ENCODE measurements at regions of chr17 and their contacts with region 1.

Region 1: DNA sequence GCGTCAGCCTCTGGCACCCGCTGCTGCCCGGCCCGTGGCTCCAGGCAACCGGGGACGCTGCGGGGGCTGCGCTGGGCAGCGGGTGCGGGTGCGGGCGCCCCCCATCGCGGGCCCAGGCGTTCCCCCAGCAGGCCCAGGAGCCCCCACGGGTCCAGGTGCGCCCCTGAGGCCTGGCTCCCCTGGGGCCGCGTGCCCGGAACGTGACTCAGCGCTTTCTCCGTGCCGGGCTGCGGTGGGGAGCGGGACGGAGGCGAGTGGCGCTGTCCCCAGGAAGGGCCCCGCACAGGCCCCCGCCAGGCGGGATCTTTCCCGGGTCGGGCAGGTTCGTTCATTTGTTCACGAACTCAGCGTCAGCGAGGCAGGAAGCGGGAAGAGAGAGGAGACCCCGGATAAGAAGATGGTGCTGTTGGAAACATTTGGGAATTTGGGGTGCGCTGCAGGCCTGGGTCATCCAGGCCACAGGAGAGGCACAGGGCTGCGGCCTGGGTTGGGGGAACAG is 18.4 kb upstream of the EXOC7 start:
- DNase-seq: no peak
- H3K4me3 ChIP-seq: peak overlapping the region; percentile 52 to 73
- H3K27ac ChIP-seq: no peak overlapping the region
- H3K4me1 ChIP-seq: peaks cover 7% of the 10 kb centered on the region in 2 donors
- H3K27me3 ChIP-seq: no peaks in the 10 kb centered on the region
- CTCF ChIP-seq: no peak

Region 2: GRCh38 chr17:76088036-76088867 is 33.7 kb before region 1 on chr17:
- intact Hi-C with region 1: no loop called
- DNase-seq: no peak
- H3K4me3 ChIP-seq: no peak overlapping the region
- H3K27ac ChIP-seq: no peak overlapping the region
- H3K4me1 ChIP-seq: no peaks in the 10 kb centered on the region
- H3K27me3 ChIP-seq: no peaks in the 10 kb centered on the region
- CTCF ChIP-seq: no peak

Region 3: GRCh38 chr17:76147211-76148014 is 25.4 kb after region 1 on chr17:
- intact Hi-C with region 1: loop called (anchors 2 kb)
- DNase-seq: no peak
- H3K4me3 ChIP-seq: no peak overlapping the region
- H3K27ac ChIP-seq: no peak overlapping the region
- H3K4me1 ChIP-seq: no peaks in the 10 kb centered on the region
- H3K27me3 ChIP-seq: no peaks in the 10 kb centered on the region
- CTCF ChIP-seq: peak; percentile 40 to 57 (median 54)

Region 4: DNA sequence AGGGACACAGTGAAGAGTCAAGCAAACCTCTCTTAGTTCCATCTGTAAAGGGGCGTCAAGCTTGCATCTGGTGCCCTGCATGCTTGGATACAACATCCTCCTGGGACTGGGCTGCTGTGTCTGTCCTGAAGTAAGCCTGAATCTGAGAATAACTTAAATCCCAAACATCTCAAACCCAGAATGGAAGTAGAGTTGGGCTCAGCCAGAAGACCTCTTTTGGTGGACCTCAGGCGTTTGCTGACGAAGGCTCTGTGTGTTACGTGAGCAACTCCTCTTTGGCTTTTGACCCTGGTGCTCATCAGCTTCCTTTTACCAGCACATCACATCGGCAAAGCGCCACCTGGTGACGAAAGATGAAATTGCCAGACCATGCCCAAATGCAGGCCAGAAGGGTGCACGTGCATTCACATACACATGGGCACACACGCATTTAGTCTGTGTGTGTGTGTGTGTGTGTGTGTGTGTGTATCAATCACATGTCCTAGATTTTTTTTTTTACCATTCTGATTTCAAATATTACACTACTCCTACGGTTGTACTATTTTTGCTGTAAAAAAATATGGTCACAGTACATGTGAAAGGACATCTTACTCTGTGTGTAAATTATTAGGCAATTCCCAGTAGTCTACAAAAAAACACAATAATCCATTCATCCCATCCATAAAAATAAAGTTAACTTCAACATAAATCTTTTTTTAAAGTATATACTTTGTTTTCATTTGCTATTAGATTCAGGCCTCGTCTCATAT is 60.2 kb after region 1 on chr17:
- intact Hi-C with region 1: loop called (anchors 1 kb)
- DNase-seq: peak; percentile 69 to 95
- H3K4me3 ChIP-seq: no peak overlapping the region
- H3K27ac ChIP-seq: no peak overlapping the region
- H3K4me1 ChIP-seq: no peaks in the 10 kb centered on the region
- H3K27me3 ChIP-seq: no peaks in the 10 kb centered on the region
- CTCF ChIP-seq: peak; percentile 76 to 87 (median 78)

Region 5: DNA sequence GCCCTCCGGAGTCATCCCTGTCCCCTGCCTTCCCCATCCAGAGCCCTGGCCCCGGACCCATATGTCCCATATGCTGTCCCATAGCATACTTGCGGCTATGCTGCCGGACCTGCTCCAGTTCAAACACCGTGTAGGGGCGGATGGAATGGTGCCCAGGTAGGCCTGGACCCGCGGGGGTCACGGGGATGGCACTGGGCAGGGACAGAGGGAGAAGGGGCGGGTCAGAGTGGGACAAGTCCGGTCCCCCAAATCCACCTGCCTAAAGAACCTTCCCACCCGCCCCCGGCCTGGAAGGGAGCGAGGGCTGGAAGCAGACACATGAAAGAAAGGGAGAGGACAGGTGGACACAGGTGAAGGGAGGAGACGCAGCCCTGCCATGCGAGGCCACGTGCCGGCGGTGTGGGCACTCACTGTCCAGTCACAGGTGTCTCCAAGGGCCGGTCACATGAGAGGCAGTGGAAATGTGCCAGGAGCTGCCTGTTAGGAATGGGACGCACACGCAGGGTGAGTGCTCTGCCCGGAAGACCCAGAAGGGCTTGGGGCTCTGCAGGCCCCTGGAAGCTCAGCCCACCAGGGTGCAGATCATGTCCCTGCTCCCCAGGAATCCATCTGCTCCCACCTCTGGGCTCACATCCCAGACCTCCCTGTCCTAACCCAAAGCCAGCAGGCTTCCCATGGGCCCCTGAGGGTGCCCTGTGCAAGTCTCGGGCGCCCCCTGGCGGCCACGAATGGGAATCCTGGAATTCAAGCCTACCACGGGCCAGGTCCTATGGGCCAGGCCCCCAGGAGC is 157.2 kb after region 1 on chr17:
- intact Hi-C with region 1: loop called (anchors 1 kb)
- DNase-seq: peak; percentile 47 to 92
- H3K4me3 ChIP-seq: no peak overlapping the region
- H3K27ac ChIP-seq: no peak overlapping the region
- H3K4me1 ChIP-seq: peaks cover 0 to 3% of the 10 kb centered on the region in 2 donors
- H3K27me3 ChIP-seq: no peaks in the 10 kb centered on the region
- CTCF ChIP-seq: peak; percentile 86 to 98 (median 93)

Region 6: GRCh38 chr17:76296186-76296585 is 174.2 kb after region 1 on chr17:
- intact Hi-C with region 1: loop called (anchors 5 kb)
- DNase-seq: no peak
- H3K4me3 ChIP-seq: no peak overlapping the region
- H3K27ac ChIP-seq: no peak overlapping the region
- H3K4me1 ChIP-seq: no peaks in the 10 kb centered on the region
- H3K27me3 ChIP-seq: no peaks in the 10 kb centered on the region
- CTCF ChIP-seq: no peak